Activated CD8-positive, alpha-beta T cell treated with anti-CD3 and anti-CD28 coated beads, Interleukin-2, amount 10 ng/mL, durations not matched to agents 7 days and 5 days (primary cell): ENCODE measurements at regions of chr12 and their contacts with region 1.

Region 1: DNA sequence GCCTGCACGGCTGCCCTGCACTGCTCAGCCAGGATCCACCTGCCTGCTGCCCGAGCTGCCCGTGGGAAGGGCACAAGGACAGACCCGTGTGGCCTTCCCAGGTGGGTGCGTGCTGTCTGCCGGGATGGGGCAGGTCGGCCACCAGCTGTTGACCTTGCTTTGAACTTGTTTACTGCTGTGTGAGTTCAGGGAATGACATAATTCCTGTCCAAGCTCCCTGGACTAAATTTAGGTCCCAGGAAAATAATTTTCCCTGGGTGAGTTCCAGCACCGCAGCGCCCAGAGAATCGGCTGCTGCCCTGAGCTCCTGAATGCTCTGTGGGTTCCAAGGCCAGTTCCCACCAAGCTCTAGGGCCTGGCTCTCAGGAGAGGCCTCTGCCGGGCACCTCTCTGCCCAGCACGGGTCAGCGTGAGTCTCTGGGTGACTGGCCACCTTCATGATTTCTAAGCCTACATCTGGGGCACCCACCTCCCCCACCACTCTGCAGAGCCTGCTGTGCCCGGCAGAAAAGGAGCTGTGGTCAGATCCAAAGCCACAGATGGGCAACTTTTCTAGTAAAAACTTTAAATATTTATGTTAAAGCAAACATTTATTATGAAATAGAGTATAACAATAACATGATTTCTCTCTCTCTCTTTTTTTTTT is 27.2 kb upstream of the MLXIP start:
- DNase-seq: no peak
- ATAC-seq: no peak
- H3K4me3 Mint-ChIP-seq: no peak overlapping the region
- H3K27ac Mint-ChIP-seq: no peak overlapping the region
- H3K4me1 Mint-ChIP-seq: peaks cover 11% of the 10 kb centered on the region
- H3K27me3 Mint-ChIP-seq: no peaks in the 10 kb centered on the region

Region 2: GRCh38 chr12:122064025-122064777 is 12.8 kb after region 1 on chr12:
- CTCF ChIA-PET with region 1: interaction called, 11 read pairs
- POLR2A ChIA-PET with region 1: no interaction called
- DNase-seq: peak; percentile 50
- ATAC-seq: peak; percentile 73
- H3K4me3 Mint-ChIP-seq: no peak overlapping the region
- H3K27ac Mint-ChIP-seq: peak overlapping the region; percentile 22
- H3K4me1 Mint-ChIP-seq: peaks cover 33% of the 10 kb centered on the region
- H3K27me3 Mint-ChIP-seq: no peaks in the 10 kb centered on the region

Region 3: DNA sequence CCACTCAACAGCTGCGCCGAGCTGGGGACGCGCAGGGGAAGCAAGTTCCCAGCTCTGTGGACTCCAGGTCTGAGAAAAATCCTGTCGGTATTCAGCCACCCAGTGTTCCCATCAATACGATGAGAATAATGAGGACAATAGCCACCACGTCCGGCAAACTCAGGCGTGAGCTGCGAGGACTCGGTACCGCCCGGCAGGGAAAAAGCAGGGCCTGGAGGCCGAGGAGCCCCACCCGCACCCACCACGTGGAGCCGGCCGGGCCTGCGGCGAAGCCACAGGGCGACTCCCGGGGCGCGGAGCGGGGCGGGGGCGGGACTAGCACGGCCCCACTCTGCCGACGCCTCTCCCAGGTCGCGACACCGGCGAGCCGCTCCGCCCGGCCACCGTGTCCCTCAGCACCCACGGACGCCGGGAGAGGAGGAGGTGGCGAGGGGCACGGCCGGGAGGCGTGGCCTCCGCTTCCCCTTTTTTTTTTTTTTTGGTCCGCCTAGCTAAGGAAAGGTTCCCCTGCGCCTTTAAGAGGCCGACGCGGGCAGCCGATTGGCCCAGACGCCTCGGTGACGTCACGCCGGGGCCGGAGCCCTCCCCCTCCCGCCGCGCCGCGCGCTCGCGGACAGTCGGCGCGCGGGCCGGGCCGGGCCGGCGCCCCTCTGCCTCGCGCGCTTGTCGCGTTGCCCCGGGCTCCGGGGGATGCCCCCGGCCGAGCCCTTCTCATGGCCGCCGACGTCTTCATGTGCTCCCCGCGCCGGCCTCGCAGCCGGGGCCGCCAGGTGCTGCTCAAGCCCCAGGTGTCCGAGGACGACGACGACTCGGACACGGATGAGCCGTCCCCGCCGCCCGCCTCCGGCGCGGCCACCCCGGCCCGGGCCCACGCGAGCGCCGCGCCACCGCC is 27.0 kb after region 1 on chr12 and contains the start of gene MLXIP:
- CTCF ChIA-PET with region 1: interaction called, 45 read pairs
- POLR2A ChIA-PET with region 1: interaction called, 11 read pairs
- DNase-seq: peak; percentile 93
- ATAC-seq: peak; percentile 81
- H3K4me3 Mint-ChIP-seq: peak within 1 kb of the TSS; percentile 86
- H3K27ac Mint-ChIP-seq: peak within 1 kb of the TSS; percentile 83
- H3K4me1 Mint-ChIP-seq: peaks cover 47% of the 10 kb centered on the region
- H3K27me3 Mint-ChIP-seq: peaks cover 5% of the 10 kb centered on the region
- total RNA-seq, gene MLXIP: 38.8 to 42.7 TPM

Region 4: GRCh38 chr12:122090759-122091515 is 39.6 kb after region 1 on chr12:
- CTCF ChIA-PET with region 1: interaction called, 10 read pairs
- POLR2A ChIA-PET with region 1: no interaction called
- DNase-seq: no peak
- ATAC-seq: no peak
- H3K4me3 Mint-ChIP-seq: no peak overlapping the region
- H3K27ac Mint-ChIP-seq: peak overlapping the region; percentile 58
- H3K4me1 Mint-ChIP-seq: peaks cover 50% of the 10 kb centered on the region
- H3K27me3 Mint-ChIP-seq: no peaks in the 10 kb centered on the region

Region 5: GRCh38 chr12:122116707-122117535 is 65.6 kb after region 1 on chr12:
- CTCF ChIA-PET with region 1: interaction called, 103 read pairs
- POLR2A ChIA-PET with region 1: no interaction called
- DNase-seq: no peak
- ATAC-seq: no peak
- H3K4me3 Mint-ChIP-seq: no peak overlapping the region
- H3K27ac Mint-ChIP-seq: no peak overlapping the region
- H3K4me1 Mint-ChIP-seq: peaks cover 10% of the 10 kb centered on the region
- H3K27me3 Mint-ChIP-seq: no peaks in the 10 kb centered on the region

Region 6: DNA sequence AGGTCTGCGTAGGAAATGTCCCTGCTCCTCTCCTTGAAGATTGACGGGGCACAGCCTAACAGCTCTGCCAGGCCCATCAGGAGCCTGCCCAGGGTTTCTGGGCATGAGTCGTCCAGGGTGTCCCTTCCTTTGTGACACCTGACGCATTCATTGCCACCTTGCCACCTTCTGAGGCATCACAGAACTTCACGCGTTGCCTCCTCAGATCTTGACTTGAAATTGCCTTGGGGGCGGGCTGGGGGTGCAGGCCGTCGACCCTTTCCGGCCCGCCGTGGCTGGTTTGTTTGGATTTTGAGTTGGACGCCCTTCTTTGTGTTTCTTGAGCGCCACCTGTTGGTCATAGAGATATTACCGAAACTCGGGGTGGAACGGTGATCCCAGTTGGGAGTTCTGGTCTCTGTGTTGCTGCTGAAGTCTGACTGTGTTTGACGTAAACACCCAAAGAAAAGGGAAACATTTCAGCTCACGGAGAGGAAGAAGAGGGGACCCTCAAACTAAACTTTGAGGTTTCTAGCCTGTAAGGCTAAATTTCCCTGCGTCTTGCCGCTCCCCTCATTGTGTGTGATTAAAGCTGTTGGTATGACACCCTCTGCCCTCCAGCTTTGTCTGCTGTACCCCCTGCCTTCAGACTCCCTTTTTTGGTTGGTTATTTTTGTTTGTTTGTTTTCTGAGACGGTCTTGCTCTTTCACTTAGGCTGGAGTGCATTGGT is 71.9 kb after region 1 on chr12:
- CTCF ChIA-PET with region 1: interaction called, 103 read pairs
- POLR2A ChIA-PET with region 1: no interaction called
- DNase-seq: peak; percentile 80
- ATAC-seq: peak; percentile 62
- H3K4me3 Mint-ChIP-seq: no peak overlapping the region
- H3K27ac Mint-ChIP-seq: peak overlapping the region; percentile 67
- H3K4me1 Mint-ChIP-seq: peaks cover 33% of the 10 kb centered on the region
- H3K27me3 Mint-ChIP-seq: no peaks in the 10 kb centered on the region

Region 7: GRCh38 chr12:122190842-122191668 is 139.7 kb after region 1 on chr12:
- CTCF ChIA-PET with region 1: interaction called, 21 read pairs
- POLR2A ChIA-PET with region 1: no interaction called
- DNase-seq: peak; percentile 83
- ATAC-seq: peak; percentile 88
- H3K4me3 Mint-ChIP-seq: no peak overlapping the region
- H3K27ac Mint-ChIP-seq: no peak overlapping the region
- H3K4me1 Mint-ChIP-seq: no peaks in the 10 kb centered on the region
- H3K27me3 Mint-ChIP-seq: peaks cover 7% of the 10 kb centered on the region